HepG2 (cell line): ENCODE measurements at regions of chr3 and their contacts with region 1.

Region 1: DNA sequence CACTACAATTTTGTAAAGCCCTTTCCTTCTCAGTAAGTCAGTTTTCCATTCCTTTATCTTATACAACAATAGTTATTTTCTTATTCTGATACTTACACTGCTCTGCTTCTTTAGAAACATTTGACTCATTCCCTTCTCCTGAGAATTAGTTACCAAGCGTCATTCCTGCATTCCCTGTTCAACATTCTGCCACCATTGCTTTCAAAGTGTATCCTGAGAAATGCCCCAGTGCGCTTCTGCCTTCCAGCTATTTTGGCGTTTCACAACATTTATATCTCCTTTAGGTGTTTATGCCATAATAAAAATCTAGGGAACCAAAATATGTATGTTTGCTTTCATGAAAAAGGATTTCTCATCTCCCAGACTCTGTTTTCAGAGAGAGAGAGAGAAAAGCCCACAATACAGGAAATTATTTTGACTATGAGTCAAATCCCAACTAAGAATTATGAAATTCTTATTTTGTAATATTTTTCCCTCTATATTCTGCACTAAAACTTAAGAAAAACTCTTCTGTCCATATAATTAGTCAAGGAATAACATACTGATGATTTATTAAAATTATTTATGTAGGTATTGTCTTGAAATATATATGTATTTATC is 118.2 kb upstream of the RAP2B start:
- DNase-seq: no peak
- ATAC-seq: no peak
- H3K4me3 ChIP-seq: no peak overlapping the region
- H3K27ac ChIP-seq: no peak overlapping the region
- H3K4me1 ChIP-seq: peaks cover 2% of the 10 kb centered on the region
- H3K27me3 ChIP-seq: no peaks in the 10 kb centered on the region
- CTCF ChIP-seq: no peak
- EP300 ChIP-seq: no peak
- POLR2A ChIP-seq: no peak
- RAD21 ChIP-seq: no peak

Region 2: GRCh38 chr3:153284282-153284938 is 240.6 kb after region 1 on chr3:
- CTCF ChIA-PET with region 1: no interaction called
- POLR2A ChIA-PET with region 1: no interaction called
- in situ Hi-C with region 1: loop called (anchors 10 kb)
- intact Hi-C with region 1: no loop called
- DNase-seq: peak; percentile 10
- ATAC-seq: no peak
- H3K4me3 ChIP-seq: no peak overlapping the region
- H3K27ac ChIP-seq: no peak overlapping the region
- H3K4me1 ChIP-seq: no peaks in the 10 kb centered on the region
- H3K27me3 ChIP-seq: no peaks in the 10 kb centered on the region; a peak in 1 of 5 replicates
- CTCF ChIP-seq: no peak
- EP300 ChIP-seq: no peak
- POLR2A ChIP-seq: no peak
- RAD21 ChIP-seq: no peak

Region 3: DNA sequence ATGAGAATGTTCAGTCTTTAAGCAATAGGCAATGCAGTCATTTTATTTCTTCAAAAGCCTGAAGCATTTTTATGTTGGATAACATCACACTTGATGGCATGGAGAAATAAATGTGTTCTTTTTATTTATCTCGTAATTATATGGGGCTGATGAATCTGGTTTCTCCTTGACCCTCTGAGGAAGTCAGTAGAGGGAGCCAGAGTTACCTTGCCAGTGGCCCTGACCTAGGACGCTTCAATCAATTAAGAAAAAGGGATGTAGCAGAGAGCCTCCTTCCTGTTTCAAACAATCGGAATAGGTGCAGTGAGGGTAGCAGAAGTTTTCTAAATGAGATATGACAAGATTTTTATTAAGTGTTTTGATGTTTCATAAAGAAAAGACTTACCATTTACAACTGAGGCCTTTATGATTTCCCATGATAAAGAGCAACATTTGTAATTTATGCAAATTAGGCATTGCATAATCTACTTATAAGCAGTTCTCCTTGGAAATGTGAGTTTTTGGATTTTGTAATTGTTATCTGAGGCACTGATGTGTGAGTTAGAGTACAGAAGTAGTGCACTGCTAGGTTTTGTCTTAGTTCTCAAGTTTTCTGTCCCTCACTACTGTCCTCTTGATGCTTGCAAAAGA is 247.3 kb after region 1 on chr3:
- CTCF ChIA-PET with region 1: interaction called, 8 read pairs
- POLR2A ChIA-PET with region 1: no interaction called
- in situ Hi-C with region 1: loop called (anchors 10 kb)
- intact Hi-C with region 1: loop called (anchors 1 kb)
- DNase-seq: peak; percentile 12
- ATAC-seq: peak; percentile 65; the same call in 2 of the 3 replicates
- H3K4me3 ChIP-seq: no peak overlapping the region
- H3K27ac ChIP-seq: no peak overlapping the region
- H3K4me1 ChIP-seq: no peaks in the 10 kb centered on the region
- H3K27me3 ChIP-seq: no peaks in the 10 kb centered on the region
- CTCF ChIP-seq: peak; percentile 42; the same call in 1 of the 2 replicates
- EP300 ChIP-seq: no peak
- POLR2A ChIP-seq: no peak
- RAD21 ChIP-seq: no peak

Region 4: DNA sequence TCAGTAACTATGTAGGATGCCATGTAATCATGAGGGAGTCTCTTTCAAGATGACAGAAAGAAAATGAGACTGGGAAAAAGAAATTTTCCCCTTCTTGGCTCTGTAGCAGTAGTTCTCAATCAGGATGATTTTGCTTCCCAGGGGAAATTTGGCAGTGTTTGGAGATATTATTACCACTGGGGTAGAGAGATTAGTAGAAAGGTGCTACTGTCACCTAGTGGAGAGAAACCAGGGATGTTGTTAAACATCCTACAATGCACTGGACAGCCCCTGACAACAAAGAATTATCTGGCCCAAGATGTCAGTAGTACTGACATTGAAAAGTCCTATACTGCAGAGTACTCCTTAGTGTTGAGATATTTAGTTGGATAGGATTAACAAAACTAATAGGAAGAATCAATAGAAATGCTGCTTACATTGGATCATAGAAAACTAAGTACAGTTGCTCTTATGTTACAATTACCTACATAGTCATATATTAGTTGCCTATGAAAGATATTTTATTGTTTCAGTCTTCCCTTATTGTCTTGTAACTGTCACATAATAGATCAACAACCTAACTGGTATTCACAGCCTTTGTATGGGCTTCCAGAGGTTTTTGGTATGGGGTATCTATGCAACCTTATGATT is 551.5 kb after region 1 on chr3:
- CTCF ChIA-PET with region 1: interaction called, 4 read pairs
- POLR2A ChIA-PET with region 1: no interaction called
- in situ Hi-C with region 1: no loop called
- intact Hi-C with region 1: loop called (anchors 1 kb)
- DNase-seq: peak; percentile 18
- ATAC-seq: peak; percentile 77
- H3K4me3 ChIP-seq: no peak overlapping the region
- H3K27ac ChIP-seq: no peak overlapping the region
- H3K4me1 ChIP-seq: peaks cover 16% of the 10 kb centered on the region
- H3K27me3 ChIP-seq: no peaks in the 10 kb centered on the region
- CTCF ChIP-seq: peak; percentile 65
- EP300 ChIP-seq: no peak
- POLR2A ChIP-seq: no peak
- RAD21 ChIP-seq: peak; percentile 33; the same call in 1 of the 2 replicates

Region 5: GRCh38 chr3:153768561-153769469 is 725.0 kb after region 1 on chr3:
- CTCF ChIA-PET with region 1: no interaction called
- POLR2A ChIA-PET with region 1: no interaction called
- in situ Hi-C with region 1: loop called (anchors 10 kb)
- intact Hi-C with region 1: loop called (anchors 1 kb)
- DNase-seq: peak; percentile 30
- ATAC-seq: peak; percentile 98
- H3K4me3 ChIP-seq: no peak overlapping the region
- H3K27ac ChIP-seq: no peak overlapping the region
- H3K4me1 ChIP-seq: no peaks in the 10 kb centered on the region
- H3K27me3 ChIP-seq: no peaks in the 10 kb centered on the region
- CTCF ChIP-seq: peak; percentile 83
- EP300 ChIP-seq: no peak
- POLR2A ChIP-seq: no peak
- RAD21 ChIP-seq: peak; percentile 48